ENCODE measurements at regions of chr15 and their contacts with region 1.

Region 1: GRCh38 chr15:90686435-90687218 is 30.5 kb upstream of the BLM start:
- DNase-seq: peak in 7 of 9 donors; percentile 52 to 83 (median 72)
- ATAC-seq: peak; percentile 91
- H3K4me3 ChIP-seq: no peak overlapping the region
- H3K4me3 Mint-ChIP-seq: peak overlapping the region; percentile 16 to 77 (median 46)
- H3K27ac ChIP-seq: peak overlapping the region; percentile 24
- H3K27ac Mint-ChIP-seq: peak overlapping the region; percentile 41 to 97 (median 80)
- H3K4me1 ChIP-seq: peaks cover 10 to 20% of the 10 kb centered on the region in 2 donors
- H3K4me1 Mint-ChIP-seq: peaks cover 25 to 51% (median 36%) of the 10 kb centered on the region in 7 donors
- H3K27me3 ChIP-seq: no peaks in the 10 kb centered on the region
- H3K27me3 Mint-ChIP-seq: no peaks in the 10 kb centered on the region

Region 2: GRCh38 chr15:90557186-90558084 is 129.2 kb before region 1 on chr15:
- CTCF ChIA-PET with region 1: no interaction called
- POLR2A ChIA-PET with region 1: no interaction called
- intact Hi-C with region 1: loop called in 1 of 2 experiments (anchors 2 kb)
- DNase-seq: peak in 1 of 9 donors; percentile 18
- ATAC-seq: no peak
- H3K4me3 ChIP-seq: no peak overlapping the region
- H3K4me3 Mint-ChIP-seq: peak overlapping the region; percentile 22 to 70 (median 54)
- H3K27ac ChIP-seq: peak overlapping the region; percentile 14
- H3K27ac Mint-ChIP-seq: peak overlapping the region; percentile 57 to 95 (median 86)
- H3K4me1 ChIP-seq: peaks cover 10 to 50% of the 10 kb centered on the region in 2 donors
- H3K4me1 Mint-ChIP-seq: peaks cover 56 to 89% (median 85%) of the 10 kb centered on the region in 7 donors
- H3K27me3 ChIP-seq: no peaks in the 10 kb centered on the region
- H3K27me3 Mint-ChIP-seq: no peaks in the 10 kb centered on the region

Region 3: DNA sequence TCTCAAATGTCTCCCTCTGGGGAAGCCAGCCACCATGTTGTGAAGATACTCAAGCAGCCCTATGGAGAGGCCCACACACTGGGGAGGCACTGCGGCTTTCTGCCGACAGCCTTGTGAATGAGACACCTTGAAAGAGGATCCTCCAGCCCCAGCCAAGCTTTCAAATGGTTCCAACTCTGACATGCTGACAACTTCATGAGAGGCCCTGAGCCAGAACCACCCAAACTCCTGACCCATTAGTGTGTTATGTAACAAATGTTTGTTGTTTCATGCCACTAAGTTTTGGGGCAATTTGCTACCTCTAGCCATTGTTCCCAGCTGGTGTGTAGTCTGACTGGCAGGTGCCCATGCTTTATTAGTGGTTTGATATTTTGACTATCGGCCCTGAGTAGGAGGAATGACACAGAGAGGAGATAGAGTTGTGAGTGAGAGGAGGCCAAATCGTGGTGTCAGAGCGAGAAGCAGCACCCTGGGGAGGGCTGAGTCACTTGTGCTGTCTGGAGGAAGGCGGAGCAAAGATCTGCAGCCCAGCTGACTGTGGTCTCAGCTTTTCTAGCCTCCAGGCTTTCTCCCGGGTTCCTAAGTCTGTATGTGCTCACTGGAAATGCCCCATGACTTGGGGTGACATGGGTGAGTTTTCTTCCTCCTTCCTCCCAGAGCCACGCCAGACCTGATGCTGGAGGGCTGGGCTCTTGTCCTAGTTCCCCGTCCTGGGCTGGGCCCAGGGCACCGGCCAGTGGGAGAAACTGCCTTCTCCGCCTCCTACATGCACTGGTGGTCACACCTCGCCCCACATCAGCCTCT is 26.2 kb before region 1 on chr15:
- CTCF ChIA-PET with region 1: no interaction called
- POLR2A ChIA-PET with region 1: interaction called, 5 read pairs
- intact Hi-C with region 1: loop called in 1 of 2 experiments (anchors 1 kb)
- DNase-seq: peak in 6 of 9 donors; percentile 25 to 68 (median 38)
- ATAC-seq: peak; percentile 83
- H3K4me3 ChIP-seq: peak overlapping the region; percentile 45
- H3K4me3 Mint-ChIP-seq: peak overlapping the region; percentile 68 to 93 (median 83)
- H3K27ac ChIP-seq: no peak overlapping the region
- H3K27ac Mint-ChIP-seq: peak overlapping the region in 4 of 9 donors; percentile 32 to 79 (median 74)
- H3K4me1 ChIP-seq: peaks cover 40 to 50% of the 10 kb centered on the region in 2 donors
- H3K4me1 Mint-ChIP-seq: peaks cover 61 to 93% (median 80%) of the 10 kb centered on the region in 7 donors
- H3K27me3 ChIP-seq: no peaks in the 10 kb centered on the region
- H3K27me3 Mint-ChIP-seq: peaks cover 0 to 32% (median 14%) of the 10 kb centered on the region in 5 donors

Measured in naive thymus-derived CD4-positive, alpha-beta T cell (primary cell).